ENCODE measurements at regions of chr13 and their contacts with region 1.

Region 1: GRCh38 chr13:46553886-46554858 is 1.2 kb downstream of the LRCH1 start:
- DNase-seq: no peak
- ATAC-seq: peak; percentile 78
- H3K4me3 ChIP-seq: peak overlapping the region; percentile 70
- H3K27ac ChIP-seq: peak overlapping the region; percentile 86
- H3K4me1 ChIP-seq: peaks cover 11% of the 10 kb centered on the region
- H3K27me3 ChIP-seq: no peaks in the 10 kb centered on the region
- CTCF ChIP-seq: peak in 2 of 3 experiments; percentile 20 to 52; a peak in 3 of 6 replicates
- EP300 ChIP-seq: peak in 1 of 2 experiments; percentile 30; a peak in 1 of 4 replicates
- POLR2A ChIP-seq: peak; percentile 90
- RAD21 ChIP-seq: no peak

Region 2: GRCh38 chr13:46571189-46571908 is 17.2 kb after region 1 on chr13:
- CTCF ChIA-PET with region 1: interaction called, 39 read pairs
- POLR2A ChIA-PET with region 1: interaction called, 24 read pairs
- RAD21 ChIA-PET with region 1: interaction called, 73 read pairs
- SMC1A ChIA-PET with region 1: interaction called, 124 read pairs
- in situ Hi-C with region 1: no loop called
- intact Hi-C with region 1: no loop called
- DNase-seq: no peak
- ATAC-seq: peak; percentile 73
- H3K4me3 ChIP-seq: peak overlapping the region; percentile 20; the same call in 1 of the 2 replicates
- H3K27ac ChIP-seq: peak overlapping the region; percentile 78
- H3K4me1 ChIP-seq: peaks cover 53% of the 10 kb centered on the region
- H3K27me3 ChIP-seq: no peaks in the 10 kb centered on the region
- CTCF ChIP-seq: no peak
- EP300 ChIP-seq: no peak
- POLR2A ChIP-seq: no peak
- RAD21 ChIP-seq: no peak

Region 3: DNA sequence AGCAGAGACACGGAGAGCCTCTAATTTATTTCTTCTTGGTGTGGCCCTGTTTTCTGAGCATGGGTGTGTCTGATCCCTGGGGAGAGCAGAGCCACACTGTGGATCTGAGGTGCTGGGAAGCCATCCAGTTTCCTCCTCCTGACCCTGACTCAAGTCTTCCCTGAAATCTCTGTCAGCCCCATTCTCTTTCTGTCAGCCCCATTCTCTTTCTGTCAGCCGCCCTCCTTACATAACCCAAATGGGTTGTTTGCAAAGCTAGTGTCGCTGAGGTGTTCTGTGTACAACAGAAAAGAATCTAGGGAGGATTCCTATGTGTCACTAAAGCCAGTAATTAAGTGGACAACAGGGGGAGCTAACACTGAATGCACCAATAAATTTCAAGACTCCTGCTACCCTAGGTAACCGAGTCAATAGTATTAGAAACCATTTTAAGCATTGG is 49.0 kb after region 1 on chr13:
- CTCF ChIA-PET with region 1: interaction called, 41 read pairs
- POLR2A ChIA-PET with region 1: interaction called, 7 read pairs
- RAD21 ChIA-PET with region 1: interaction called, 14 read pairs
- SMC1A ChIA-PET with region 1: interaction called, 22 read pairs
- in situ Hi-C with region 1: no loop called
- intact Hi-C with region 1: loop called (anchors 2 kb)
- DNase-seq: no peak
- ATAC-seq: no peak
- H3K4me3 ChIP-seq: no peak overlapping the region
- H3K27ac ChIP-seq: no peak overlapping the region
- H3K4me1 ChIP-seq: peaks cover 47% of the 10 kb centered on the region
- H3K27me3 ChIP-seq: no peaks in the 10 kb centered on the region
- CTCF ChIP-seq: peak; percentile 28 to 38 (median 36); a peak in 3 of 6 replicates
- EP300 ChIP-seq: no peak
- POLR2A ChIP-seq: no peak
- RAD21 ChIP-seq: peak; percentile 48

Region 4: GRCh38 chr13:46639033-46639981 is 85.1 kb after region 1 on chr13:
- CTCF ChIA-PET with region 1: interaction called, 17 read pairs
- POLR2A ChIA-PET with region 1: interaction called, 4 read pairs
- RAD21 ChIA-PET with region 1: interaction called, 11 read pairs
- SMC1A ChIA-PET with region 1: interaction called, 17 read pairs
- in situ Hi-C with region 1: no loop called
- intact Hi-C with region 1: no loop called
- DNase-seq: peak; percentile 71
- ATAC-seq: peak; percentile 95
- H3K4me3 ChIP-seq: peak overlapping the region; percentile 41
- H3K27ac ChIP-seq: peak overlapping the region; percentile 56
- H3K4me1 ChIP-seq: peaks cover 20% of the 10 kb centered on the region
- H3K27me3 ChIP-seq: no peaks in the 10 kb centered on the region
- CTCF ChIP-seq: no peak
- EP300 ChIP-seq: peak; percentile 93 to 96
- POLR2A ChIP-seq: no peak
- RAD21 ChIP-seq: no peak

Region 5: DNA sequence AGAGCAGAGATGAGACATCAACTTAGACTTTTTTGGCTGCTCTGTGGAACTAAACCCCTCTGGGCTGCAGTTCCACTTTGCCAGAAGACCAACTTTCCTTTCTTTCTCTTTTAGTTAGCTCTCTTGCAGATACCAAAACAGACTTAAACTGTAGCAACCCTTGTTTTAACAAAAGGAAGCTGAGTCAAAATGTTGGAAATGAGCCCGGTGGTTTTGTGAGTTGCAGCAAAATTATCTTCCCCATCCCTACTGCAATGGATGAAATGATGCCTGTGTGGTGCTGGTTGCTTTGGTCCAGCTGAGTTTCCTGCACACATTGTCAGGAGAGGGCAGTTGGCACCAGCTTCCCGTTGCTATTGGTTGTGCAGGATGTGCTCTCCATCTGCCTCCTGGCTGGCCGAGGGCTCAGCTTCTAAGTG is 114.1 kb after region 1 on chr13:
- CTCF ChIA-PET with region 1: interaction called, 64 read pairs
- POLR2A ChIA-PET with region 1: interaction called, 3 read pairs
- RAD21 ChIA-PET with region 1: interaction called, 25 read pairs
- SMC1A ChIA-PET with region 1: interaction called, 17 read pairs
- in situ Hi-C with region 1: no loop called
- intact Hi-C with region 1: loop called (anchors 5 kb)
- DNase-seq: no peak
- ATAC-seq: peak; percentile 11
- H3K4me3 ChIP-seq: peak overlapping the region; percentile 66
- H3K27ac ChIP-seq: peak overlapping the region; percentile 91
- H3K4me1 ChIP-seq: peaks cover 30% of the 10 kb centered on the region
- H3K27me3 ChIP-seq: no peaks in the 10 kb centered on the region
- CTCF ChIP-seq: no peak
- EP300 ChIP-seq: 0 out of 4 replicates have a peak, but pooled peaks of 1 of the 2 experiments have one; percentile 17
- POLR2A ChIP-seq: no peak
- RAD21 ChIP-seq: no peak

Region 6: DNA sequence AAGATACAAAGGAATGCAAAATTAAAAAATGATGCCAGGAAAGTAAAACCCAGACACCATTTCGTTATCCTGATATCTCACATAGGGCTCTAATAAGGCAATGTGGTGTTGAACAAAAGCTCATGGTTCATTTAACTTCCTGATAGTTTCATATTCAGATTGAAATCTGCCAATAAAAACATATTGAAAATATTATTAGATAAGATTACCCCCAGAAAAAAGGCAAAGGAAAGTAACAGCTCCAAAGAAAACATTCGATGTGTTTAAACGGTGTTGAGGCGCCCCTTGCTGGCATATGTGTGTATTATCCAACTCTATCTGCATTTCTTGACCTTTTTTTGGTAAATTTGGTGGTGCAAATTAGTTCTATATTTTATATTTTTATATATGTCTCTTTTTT is 166.9 kb after region 1 on chr13:
- CTCF ChIA-PET with region 1: interaction called, 92 read pairs
- POLR2A ChIA-PET with region 1: no interaction called
- RAD21 ChIA-PET with region 1: interaction called, 49 read pairs
- SMC1A ChIA-PET with region 1: interaction called, 80 read pairs
- in situ Hi-C with region 1: loop called (anchors 5 kb)
- intact Hi-C with region 1: loop called (anchors 2 kb)
- DNase-seq: no peak
- ATAC-seq: peak; percentile 65
- H3K4me3 ChIP-seq: no peak overlapping the region
- H3K27ac ChIP-seq: no peak overlapping the region; the same call in 1 of the 2 replicates
- H3K4me1 ChIP-seq: peaks cover 8% of the 10 kb centered on the region; the same call in 1 of the 2 replicates
- H3K27me3 ChIP-seq: no peaks in the 10 kb centered on the region
- CTCF ChIP-seq: peak; percentile 37 to 57 (median 56); a peak in 5 of 6 replicates
- EP300 ChIP-seq: no peak
- POLR2A ChIP-seq: no peak
- RAD21 ChIP-seq: peak; percentile 75

Measured in GM12878 (cell line).